ENCODE measurements at regions of chr17 and their contacts with region 1.

Region 1: GRCh38 chr17:39653662-39654331 is 11.4 kb upstream of the TCAP start:
- DNase-seq: peak; percentile 93
- ATAC-seq: peak; percentile 46
- H3K4me3 Mint-ChIP-seq: no peak overlapping the region
- H3K27ac Mint-ChIP-seq: no peak overlapping the region; the same call in 1 of the 2 replicates
- H3K4me1 Mint-ChIP-seq: peaks cover 46% of the 10 kb centered on the region
- H3K27me3 Mint-ChIP-seq: no peaks in the 10 kb centered on the region
- CTCF ChIP-seq: peak; percentile 92

Region 2: DNA sequence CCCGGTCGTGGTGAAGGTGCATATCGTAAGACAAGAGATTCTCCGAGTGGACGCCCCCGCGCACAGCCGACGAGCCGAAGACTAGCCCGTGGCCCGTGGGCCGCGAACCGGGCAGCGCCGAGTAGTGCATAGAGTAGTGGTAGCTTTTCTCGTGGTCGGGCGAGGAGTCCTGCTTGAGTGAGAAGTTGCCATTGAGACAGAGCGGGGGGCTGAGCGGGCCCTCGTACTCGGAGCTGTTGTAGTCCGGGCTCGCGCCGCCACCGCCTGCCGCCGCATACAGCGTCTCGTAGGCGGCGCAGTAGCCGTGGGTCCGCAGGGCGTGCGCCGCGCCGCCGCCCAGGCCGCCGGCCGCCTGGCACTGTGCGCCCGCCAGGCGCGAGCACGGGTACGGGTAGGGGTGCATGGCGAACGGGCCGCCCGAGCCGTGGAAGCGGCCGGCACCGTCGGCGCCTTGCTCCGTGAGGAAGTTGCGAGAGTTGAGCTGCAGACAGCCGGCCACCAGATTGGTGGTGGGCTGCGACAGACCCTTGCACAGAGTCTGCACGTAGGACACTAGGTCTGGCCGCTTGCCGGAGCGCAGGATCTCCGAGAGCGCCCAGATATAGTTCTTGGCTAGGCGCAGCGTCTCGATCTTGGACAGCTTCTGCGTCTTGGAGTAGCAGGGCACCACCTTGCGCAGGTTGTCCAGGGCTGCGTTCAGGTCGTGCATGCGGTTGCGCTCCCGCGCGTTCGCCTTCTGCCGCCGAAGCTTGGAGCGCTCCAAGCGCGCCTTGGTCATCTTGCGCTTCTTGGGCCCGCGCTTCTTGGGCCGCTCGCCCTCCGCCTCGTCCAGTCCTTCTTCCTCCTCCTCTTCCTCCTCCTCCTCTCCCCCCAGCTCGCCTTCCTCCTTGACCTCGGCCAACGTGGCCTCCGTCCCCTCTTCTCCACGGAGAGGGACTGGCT is 48.0 kb before region 1 on chr17:
- CTCF ChIA-PET with region 1: interaction called, 10 read pairs
- POLR2A ChIA-PET with region 1: no interaction called
- DNase-seq: peak; percentile 48
- ATAC-seq: peak; percentile 19
- H3K4me3 Mint-ChIP-seq: peak overlapping the region; percentile 60
- H3K27ac Mint-ChIP-seq: no peak overlapping the region
- H3K4me1 Mint-ChIP-seq: peaks cover 45% of the 10 kb centered on the region
- H3K27me3 Mint-ChIP-seq: peaks cover 100% of the 10 kb centered on the region
- CTCF ChIP-seq: no peak

Region 3: DNA sequence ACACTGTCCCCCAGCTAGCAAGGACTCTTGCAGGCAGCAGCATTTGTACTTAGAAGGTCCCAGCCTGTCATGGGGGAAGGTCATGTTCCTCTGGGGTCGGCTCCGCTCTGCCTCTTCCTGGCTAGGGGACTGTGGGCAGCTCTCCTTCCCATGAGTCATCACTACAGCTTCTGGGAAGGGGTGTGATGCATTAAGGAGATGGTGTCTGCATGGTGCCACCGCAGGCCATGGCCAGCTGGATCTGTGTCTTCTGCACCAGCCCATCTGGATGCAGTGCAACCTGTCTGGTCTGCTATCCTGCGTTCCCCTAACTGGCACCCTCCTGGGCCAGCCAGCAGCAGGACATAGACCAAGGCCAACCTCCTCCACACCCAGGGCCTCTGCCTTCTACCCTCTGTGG is 10.5 kb before region 1 on chr17:
- CTCF ChIA-PET with region 1: interaction called, 851 read pairs
- POLR2A ChIA-PET with region 1: interaction called, 6 read pairs
- DNase-seq: no peak
- ATAC-seq: no peak
- H3K4me3 Mint-ChIP-seq: no peak overlapping the region
- H3K27ac Mint-ChIP-seq: 0 out of 2 replicates have a peak overlapping the region, but pooled peaks have one; percentile 37
- H3K4me1 Mint-ChIP-seq: peaks cover 55% of the 10 kb centered on the region
- H3K27me3 Mint-ChIP-seq: no peaks in the 10 kb centered on the region
- CTCF ChIP-seq: no peak

Region 4: GRCh38 chr17:39687811-39688518 is 34.2 kb after region 1 on chr17 and contains the start of gene PGAP3:
- CTCF ChIA-PET with region 1: interaction called, 15 read pairs
- POLR2A ChIA-PET with region 1: no interaction called
- DNase-seq: peak; percentile 87
- ATAC-seq: peak; percentile 85
- H3K4me3 Mint-ChIP-seq: peak within 1 kb of the TSS; percentile 82
- H3K27ac Mint-ChIP-seq: peak within 1 kb of the TSS; percentile 93
- H3K4me1 Mint-ChIP-seq: peaks cover 41% of the 10 kb centered on the region
- H3K27me3 Mint-ChIP-seq: no peaks in the 10 kb centered on the region
- CTCF ChIP-seq: no peak
- total RNA-seq, gene PGAP3: 24.3 to 25.7 TPM (median 24.9 TPM) in 3 replicates

Region 5: GRCh38 chr17:39730095-39730921 is 76.5 kb after region 1 on chr17 and contains the start of gene MIEN1:
- CTCF ChIA-PET with region 1: interaction called, 23 read pairs
- POLR2A ChIA-PET with region 1: no interaction called
- DNase-seq: peak; percentile 97
- ATAC-seq: peak; percentile 85
- H3K4me3 Mint-ChIP-seq: peak within 1 kb of the TSS; percentile 89
- H3K27ac Mint-ChIP-seq: peak within 1 kb of the TSS; percentile 91
- H3K4me1 Mint-ChIP-seq: peaks cover 14% of the 10 kb centered on the region
- H3K27me3 Mint-ChIP-seq: no peaks in the 10 kb centered on the region
- CTCF ChIP-seq: peak; percentile 81
- total RNA-seq, gene MIEN1: 40.6 to 46.7 TPM (median 46.5 TPM) in 3 replicates

Region 6: GRCh38 chr17:39740357-39741131 is 86.7 kb after region 1 on chr17:
- CTCF ChIA-PET with region 1: no interaction called
- POLR2A ChIA-PET with region 1: no interaction called
- DNase-seq: peak; percentile 78
- ATAC-seq: peak; percentile 69
- H3K4me3 Mint-ChIP-seq: peak overlapping the region; percentile 91
- H3K27ac Mint-ChIP-seq: peak overlapping the region; percentile 98
- H3K4me1 Mint-ChIP-seq: peaks cover 37% of the 10 kb centered on the region
- H3K27me3 Mint-ChIP-seq: no peaks in the 10 kb centered on the region; the same call in 1 of the 2 replicates
- CTCF ChIP-seq: no peak

Measured in WTC11 (cell line).